SK-N-SH (cell line): ENCODE measurements at regions of chr6 and their contacts with region 1.

Region 1: GRCh38 chr6:42059743-42060142 is 9.4 kb downstream of the TAF8 start:
- DNase-seq: no peak
- H3K4me3 ChIP-seq: no peak overlapping the region
- H3K27ac ChIP-seq: no peak overlapping the region
- H3K4me1 ChIP-seq: no peaks in the 10 kb centered on the region
- H3K27me3 ChIP-seq: no peaks in the 10 kb centered on the region
- CTCF ChIP-seq: no peak
- EP300 ChIP-seq: no peak
- RAD21 ChIP-seq: no peak

Region 2: DNA sequence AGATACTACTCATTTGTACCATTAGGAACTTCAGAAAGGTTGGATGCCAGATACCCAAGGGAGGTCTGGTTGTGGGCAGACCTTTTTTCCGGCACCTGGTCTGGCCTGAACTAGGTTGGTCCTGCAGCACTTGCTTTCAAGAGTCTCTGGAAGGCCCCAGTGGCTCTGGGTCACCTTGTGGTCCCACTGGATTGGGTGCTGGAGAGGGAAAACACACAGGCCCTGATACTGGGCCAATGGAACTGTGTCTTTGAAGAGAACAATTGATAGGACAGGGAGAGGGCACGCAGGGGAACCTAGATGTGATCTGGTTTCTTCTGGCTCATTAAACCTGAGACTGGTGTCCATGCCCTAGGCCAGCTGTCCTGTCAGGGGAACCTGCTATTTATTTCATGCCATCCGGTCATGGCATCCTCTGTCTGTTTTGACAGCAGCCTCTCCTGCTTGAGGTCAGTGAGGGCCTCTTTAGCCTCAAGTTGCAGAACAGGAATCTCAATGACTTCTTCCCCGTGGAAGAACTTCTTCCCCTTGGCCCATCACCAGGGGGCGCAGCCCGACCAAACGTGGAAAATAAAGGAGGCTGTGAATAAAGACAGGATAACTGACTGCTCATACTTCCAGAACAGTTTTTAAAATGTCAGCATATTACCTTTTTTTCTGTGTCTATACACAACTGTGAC is 15.6 kb after region 1 on chr6:
- CTCF ChIA-PET with region 1: interaction called, 10 read pairs
- POLR2A ChIA-PET with region 1: no interaction called
- DNase-seq: peak; percentile 78
- H3K4me3 ChIP-seq: no peak overlapping the region; a peak in 1 of 4 replicates
- H3K27ac ChIP-seq: no peak overlapping the region
- H3K4me1 ChIP-seq: no peaks in the 10 kb centered on the region
- H3K27me3 ChIP-seq: no peaks in the 10 kb centered on the region
- CTCF ChIP-seq: peak; percentile 94
- EP300 ChIP-seq: no peak
- RAD21 ChIP-seq: peak; percentile 93